ENCODE measurements at regions of chr1 and their contacts with region 1.

Region 1: DNA sequence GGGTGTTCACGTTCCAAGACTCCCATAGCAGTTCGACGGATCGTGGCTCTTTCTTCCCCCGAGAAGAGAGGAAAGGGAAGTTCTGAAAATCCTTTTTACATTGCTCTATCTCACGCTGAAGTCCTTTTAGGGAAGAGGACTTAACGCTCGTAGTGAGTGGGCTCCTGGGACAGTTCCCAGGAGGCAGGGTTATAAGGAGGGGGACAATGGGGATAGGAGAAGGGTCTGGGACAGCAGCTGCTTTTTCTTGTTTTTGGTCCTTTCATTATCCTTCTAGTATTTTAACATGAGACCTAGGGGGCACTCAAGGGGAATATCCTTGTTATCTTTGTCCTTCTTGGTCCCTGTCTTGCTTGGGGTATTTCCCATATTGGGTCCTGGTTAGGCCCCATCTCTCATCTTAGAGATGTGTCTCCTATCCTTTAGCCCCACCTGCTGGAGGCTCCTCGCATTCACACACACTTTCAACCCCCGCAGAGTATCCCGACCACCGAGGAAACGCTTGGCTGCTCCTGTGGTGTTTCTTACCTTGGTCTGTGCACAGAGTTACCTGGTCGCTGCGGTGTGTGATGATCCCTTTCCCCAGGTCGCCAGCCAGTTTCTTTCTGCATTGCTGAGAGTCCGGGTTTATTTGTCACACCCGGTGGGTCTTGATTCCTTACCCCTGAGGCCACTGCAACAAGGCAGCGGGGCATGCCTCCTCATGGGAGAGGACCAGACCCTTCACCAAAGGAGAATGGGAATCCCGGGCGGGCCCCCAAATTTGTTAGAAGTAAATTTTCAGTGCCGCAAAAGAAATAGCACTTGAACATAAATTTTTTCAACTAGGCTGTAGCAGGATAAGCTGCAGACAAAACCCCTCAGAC is 29.7 kb downstream of the SCCPDH start:
- DNase-seq: peak; percentile 8
- ATAC-seq: peak; percentile 100
- H3K4me3 ChIP-seq: no peak overlapping the region
- H3K27ac ChIP-seq: no peak overlapping the region
- H3K4me1 ChIP-seq: no peaks in the 10 kb centered on the region
- H3K27me3 ChIP-seq: no peaks in the 10 kb centered on the region
- CTCF ChIP-seq: peak; percentile 78 to 86 (median 83)
- EP300 ChIP-seq: no peak
- POLR2A ChIP-seq: no peak
- RAD21 ChIP-seq: peak; percentile 87

Region 2: DNA sequence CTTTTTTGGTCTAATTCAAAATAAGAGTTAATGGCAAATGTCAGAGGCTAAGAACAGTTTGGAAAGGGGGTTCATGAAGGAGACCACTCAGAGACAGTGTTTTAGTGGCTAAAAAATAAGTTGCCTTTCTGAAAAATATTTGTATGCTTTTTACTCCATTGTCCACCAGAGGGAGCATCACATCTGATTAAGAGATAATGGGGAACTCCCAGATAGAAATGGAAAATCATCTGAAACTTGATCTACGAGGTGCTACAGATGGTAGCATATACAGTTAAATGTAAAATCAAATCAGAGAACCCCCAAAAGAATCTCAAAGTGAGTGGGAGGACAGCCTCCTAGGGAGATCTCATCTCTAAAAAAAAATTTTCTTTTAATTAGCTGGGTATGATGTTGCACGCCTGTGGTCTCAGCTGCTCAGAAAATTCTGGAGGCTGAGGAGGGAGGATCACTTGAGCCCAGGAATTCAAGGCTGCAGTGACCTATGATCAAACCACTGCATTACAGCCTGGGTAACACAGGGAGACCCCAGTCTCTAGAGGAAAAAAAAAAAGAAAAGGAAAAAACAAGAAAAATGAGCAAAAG is 256.5 kb before region 1 on chr1:
- CTCF ChIA-PET with region 1: interaction called, 13 read pairs
- POLR2A ChIA-PET with region 1: no interaction called
- RAD21 ChIA-PET with region 1: interaction called, 4 read pairs
- SMC1A ChIA-PET with region 1: interaction called, 4 read pairs
- in situ Hi-C with region 1: loop called (anchors 5 kb)
- intact Hi-C with region 1: loop called (anchors 1 kb)
- DNase-seq: no peak
- ATAC-seq: peak; percentile 86
- H3K4me3 ChIP-seq: no peak overlapping the region
- H3K27ac ChIP-seq: no peak overlapping the region
- H3K4me1 ChIP-seq: no peaks in the 10 kb centered on the region; the same call in 1 of the 2 replicates
- H3K27me3 ChIP-seq: no peaks in the 10 kb centered on the region
- CTCF ChIP-seq: peak; percentile 52 to 78 (median 57); a peak in 5 of 6 replicates
- EP300 ChIP-seq: no peak
- POLR2A ChIP-seq: no peak
- RAD21 ChIP-seq: peak; percentile 81

Region 3: DNA sequence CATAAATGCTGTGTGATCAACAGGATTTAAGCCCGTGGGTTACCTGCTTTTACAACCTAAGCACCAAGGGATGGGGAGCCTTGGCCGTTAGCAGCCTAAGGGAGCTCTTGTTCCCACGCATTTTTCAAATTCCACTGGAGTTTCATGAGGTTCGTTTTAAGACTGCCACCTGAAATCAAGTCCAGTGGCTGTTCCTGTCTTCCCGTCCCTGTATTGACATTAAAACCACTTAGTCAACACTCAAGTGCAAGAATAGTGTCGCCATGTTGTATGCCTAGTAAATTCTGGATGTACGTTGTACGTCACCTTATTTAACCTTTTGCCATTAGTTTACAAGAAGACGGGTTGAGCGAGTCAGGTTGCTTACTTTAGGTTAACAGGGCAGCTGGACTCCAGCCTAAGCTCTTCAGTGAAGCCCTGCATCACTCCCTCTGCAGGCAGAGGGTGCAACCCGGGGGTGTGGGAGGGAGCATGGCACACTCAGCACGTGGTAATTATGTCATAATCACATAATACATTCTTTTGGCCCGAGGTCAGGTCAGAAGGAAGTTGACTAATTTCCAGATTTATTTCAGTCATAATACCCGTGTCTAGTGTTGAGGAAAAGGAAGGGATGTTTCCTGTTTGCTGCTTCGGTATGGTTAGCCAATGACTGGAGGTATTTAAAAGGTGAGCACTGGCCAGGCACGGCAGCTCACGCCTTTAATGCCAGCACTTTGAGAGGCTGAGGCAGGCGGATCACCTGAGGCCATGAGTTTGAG is 145.1 kb before region 1 on chr1:
- CTCF ChIA-PET with region 1: no interaction called
- POLR2A ChIA-PET with region 1: no interaction called
- RAD21 ChIA-PET with region 1: no interaction called
- SMC1A ChIA-PET with region 1: no interaction called
- in situ Hi-C with region 1: no loop called
- intact Hi-C with region 1: no loop called
- DNase-seq: no peak
- ATAC-seq: peak; percentile 79
- H3K4me3 ChIP-seq: no peak overlapping the region
- H3K27ac ChIP-seq: no peak overlapping the region
- H3K4me1 ChIP-seq: no peaks in the 10 kb centered on the region; the same call in 1 of the 2 replicates
- H3K27me3 ChIP-seq: no peaks in the 10 kb centered on the region
- CTCF ChIP-seq: no peak
- EP300 ChIP-seq: no peak
- POLR2A ChIP-seq: no peak
- RAD21 ChIP-seq: no peak

Region 4: GRCh38 chr1:246658567-246658966 is 95.3 kb before region 1 on chr1:
- CTCF ChIA-PET with region 1: no interaction called
- POLR2A ChIA-PET with region 1: no interaction called
- RAD21 ChIA-PET with region 1: no interaction called
- SMC1A ChIA-PET with region 1: no interaction called
- in situ Hi-C with region 1: no loop called
- intact Hi-C with region 1: no loop called
- DNase-seq: no peak
- ATAC-seq: no peak
- H3K4me3 ChIP-seq: no peak overlapping the region
- H3K27ac ChIP-seq: no peak overlapping the region
- H3K4me1 ChIP-seq: peaks cover 3% of the 10 kb centered on the region; the same call in 1 of the 2 replicates
- H3K27me3 ChIP-seq: no peaks in the 10 kb centered on the region
- CTCF ChIP-seq: no peak
- EP300 ChIP-seq: no peak
- POLR2A ChIP-seq: no peak
- RAD21 ChIP-seq: no peak

Region 5: GRCh38 chr1:246689409-246690008 is 64.4 kb before region 1 on chr1:
- CTCF ChIA-PET with region 1: interaction called, 10 read pairs
- POLR2A ChIA-PET with region 1: no interaction called
- RAD21 ChIA-PET with region 1: interaction called, 3 read pairs
- SMC1A ChIA-PET with region 1: no interaction called
- in situ Hi-C with region 1: no loop called
- intact Hi-C with region 1: loop called (anchors 1 kb)
- DNase-seq: peak; percentile 34
- ATAC-seq: peak; percentile 99
- H3K4me3 ChIP-seq: peak overlapping the region; percentile 63; the same call in 1 of the 2 replicates
- H3K27ac ChIP-seq: no peak overlapping the region
- H3K4me1 ChIP-seq: no peaks in the 10 kb centered on the region
- H3K27me3 ChIP-seq: no peaks in the 10 kb centered on the region
- CTCF ChIP-seq: peak; percentile 84 to 91 (median 90)
- EP300 ChIP-seq: no peak
- POLR2A ChIP-seq: no peak
- RAD21 ChIP-seq: peak; percentile 82

Region 6: GRCh38 chr1:246699095-246699735 is 54.7 kb before region 1 on chr1:
- CTCF ChIA-PET with region 1: interaction called, 8 read pairs
- POLR2A ChIA-PET with region 1: no interaction called
- RAD21 ChIA-PET with region 1: no interaction called
- SMC1A ChIA-PET with region 1: interaction called, 3 read pairs
- in situ Hi-C with region 1: no loop called
- intact Hi-C with region 1: loop called (anchors 2 kb)
- DNase-seq: peak; percentile 76
- ATAC-seq: peak; percentile 97
- H3K4me3 ChIP-seq: 0 out of 2 replicates have a peak overlapping the region, but pooled peaks have one; percentile 13
- H3K27ac ChIP-seq: peak overlapping the region; percentile 50
- H3K4me1 ChIP-seq: peaks cover 4% of the 10 kb centered on the region
- H3K27me3 ChIP-seq: no peaks in the 10 kb centered on the region
- CTCF ChIP-seq: peak; percentile 79 to 90 (median 90)
- EP300 ChIP-seq: no peak
- POLR2A ChIP-seq: no peak; the same call in 1 of the 2 replicates
- RAD21 ChIP-seq: peak; percentile 89

Region 7: DNA sequence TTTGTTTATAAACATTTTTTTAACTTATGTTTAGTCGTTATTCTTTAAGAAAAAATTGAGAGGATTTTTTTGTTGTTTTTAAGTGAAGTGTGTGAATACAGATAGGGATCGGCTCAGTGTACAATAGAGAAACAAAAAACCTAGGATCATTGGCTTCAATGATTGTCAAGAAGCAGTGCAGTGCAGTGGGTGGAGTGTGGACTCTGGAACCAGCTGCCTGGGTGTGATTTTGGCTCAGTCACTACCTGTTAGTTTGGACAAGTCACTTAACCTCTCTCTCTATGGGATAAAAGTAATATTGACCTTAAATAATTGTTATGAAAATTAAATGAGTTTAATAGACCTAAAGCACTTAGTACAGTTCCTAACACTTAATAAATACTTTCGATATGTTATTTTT is 11.6 kb after region 1 on chr1:
- CTCF ChIA-PET with region 1: interaction called, 10 read pairs
- POLR2A ChIA-PET with region 1: interaction called, 4 read pairs
- RAD21 ChIA-PET with region 1: no interaction called
- SMC1A ChIA-PET with region 1: interaction called, 6 read pairs
- in situ Hi-C with region 1: no loop called
- intact Hi-C with region 1: no loop called
- DNase-seq: no peak
- ATAC-seq: no peak
- H3K4me3 ChIP-seq: no peak overlapping the region
- H3K27ac ChIP-seq: no peak overlapping the region
- H3K4me1 ChIP-seq: no peaks in the 10 kb centered on the region
- H3K27me3 ChIP-seq: no peaks in the 10 kb centered on the region
- CTCF ChIP-seq: no peak
- EP300 ChIP-seq: no peak
- POLR2A ChIP-seq: no peak
- RAD21 ChIP-seq: no peak

Region 8: DNA sequence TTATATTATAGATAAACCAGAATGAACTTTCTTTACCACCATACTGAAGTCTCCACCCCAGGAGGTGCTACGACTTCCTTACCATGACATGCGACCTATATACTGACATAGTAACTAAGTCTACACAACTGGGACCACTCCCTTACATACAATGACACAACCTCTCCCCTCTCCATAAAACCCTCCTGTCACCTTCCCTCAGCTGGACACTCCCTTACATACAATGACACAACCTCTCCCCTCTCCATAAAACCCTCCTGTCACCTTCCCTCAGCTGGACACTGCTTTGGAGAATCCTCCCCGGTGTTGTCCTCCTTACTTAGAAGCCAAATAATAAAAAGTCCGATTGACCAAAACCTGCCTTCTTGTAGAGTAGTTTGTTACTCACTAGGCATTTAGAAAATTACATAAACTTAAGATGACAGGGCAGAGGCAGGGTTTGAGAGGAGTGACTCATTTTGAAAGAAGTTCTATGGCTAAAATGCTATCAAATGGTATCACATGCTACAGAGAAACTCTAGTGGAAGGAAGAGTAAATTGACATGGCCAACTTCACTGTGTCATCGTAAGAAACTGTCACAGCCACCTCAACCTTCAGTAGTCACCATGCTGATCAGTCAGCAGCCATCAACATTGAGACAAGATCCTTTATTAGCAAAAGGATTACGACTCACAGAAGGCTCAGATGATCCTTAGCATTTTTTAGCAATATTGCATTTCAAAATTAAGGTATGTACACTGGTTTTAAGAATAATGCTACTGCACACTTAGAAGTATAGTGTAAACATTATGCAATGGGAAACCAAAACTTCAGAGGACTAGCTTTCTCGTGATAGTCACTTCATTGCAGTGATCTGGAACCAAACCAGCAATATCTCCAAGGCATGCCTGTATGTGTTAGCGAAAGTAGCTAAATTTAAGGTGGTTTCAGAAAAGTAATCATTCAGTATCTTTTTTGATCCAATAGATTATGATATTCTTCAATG is 121.4 kb after region 1 on chr1:
- CTCF ChIA-PET with region 1: no interaction called
- POLR2A ChIA-PET with region 1: no interaction called
- RAD21 ChIA-PET with region 1: no interaction called
- SMC1A ChIA-PET with region 1: no interaction called
- in situ Hi-C with region 1: no loop called
- intact Hi-C with region 1: no loop called
- DNase-seq: peak; percentile 23
- ATAC-seq: peak; percentile 87
- H3K4me3 ChIP-seq: no peak overlapping the region
- H3K27ac ChIP-seq: no peak overlapping the region
- H3K4me1 ChIP-seq: peaks cover 6% of the 10 kb centered on the region
- H3K27me3 ChIP-seq: no peaks in the 10 kb centered on the region
- CTCF ChIP-seq: no peak
- EP300 ChIP-seq: no peak
- POLR2A ChIP-seq: no peak
- RAD21 ChIP-seq: no peak

Measured in GM12878 (cell line).